ENCODE measurements at regions of chr18 and their contacts with region 1.

Region 1: DNA sequence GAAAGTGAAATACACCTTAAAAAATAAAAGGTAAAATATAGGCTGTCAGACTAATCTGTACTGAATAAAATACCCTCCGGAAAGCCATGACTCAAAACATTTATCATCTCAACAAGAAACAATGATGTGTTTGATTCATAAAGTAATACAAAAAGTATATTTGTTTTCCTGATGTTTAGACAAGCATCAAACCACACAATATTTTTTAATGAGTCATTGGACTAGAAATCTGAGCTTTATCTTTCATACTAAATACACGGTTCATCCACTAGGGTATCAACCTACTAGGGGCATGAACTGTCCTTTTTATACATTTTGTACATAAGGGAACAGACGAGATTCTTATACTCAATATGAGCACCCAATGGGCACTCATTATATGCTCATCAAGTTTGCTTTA is 31.3 kb downstream of the CD226 start:
- DNase-seq: no peak
- H3K4me3 Mint-ChIP-seq: no peak overlapping the region
- H3K27ac Mint-ChIP-seq: no peak overlapping the region
- H3K4me1 Mint-ChIP-seq: peaks cover 49% of the 10 kb centered on the region
- H3K27me3 Mint-ChIP-seq: no peaks in the 10 kb centered on the region

Region 2: DNA sequence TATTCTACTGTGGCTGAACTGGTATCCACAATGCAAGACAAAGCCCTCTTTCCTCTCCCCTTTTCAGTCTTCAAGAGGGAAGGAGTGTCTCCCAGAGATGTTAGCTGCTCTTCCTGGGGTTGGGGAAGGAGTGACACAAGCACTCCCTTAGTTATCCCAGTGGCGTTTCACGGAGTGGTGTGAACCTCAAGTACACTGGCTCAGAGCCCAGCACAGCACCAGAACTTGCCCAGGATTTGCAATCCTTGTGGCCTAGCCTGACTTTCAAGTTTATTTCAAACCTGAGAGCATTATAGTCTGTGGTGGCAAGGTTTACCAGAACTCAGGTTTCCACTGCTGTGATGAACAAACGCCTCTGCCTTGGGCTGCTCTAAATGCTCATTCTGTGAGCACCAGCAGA is 956.1 kb before region 1 on chr18:
- CTCF ChIA-PET with region 1: no interaction called
- intact Hi-C with region 1: no loop called
- DNase-seq: no peak
- H3K4me3 Mint-ChIP-seq: no peak overlapping the region
- H3K27ac Mint-ChIP-seq: no peak overlapping the region
- H3K4me1 Mint-ChIP-seq: no peaks in the 10 kb centered on the region
- H3K27me3 Mint-ChIP-seq: no peaks in the 10 kb centered on the region

Region 3: GRCh38 chr18:69830189-69830588 is 86.2 kb before region 1 on chr18:
- CTCF ChIA-PET with region 1: no interaction called
- intact Hi-C with region 1: no loop called
- DNase-seq: no peak
- H3K4me3 Mint-ChIP-seq: no peak overlapping the region
- H3K27ac Mint-ChIP-seq: no peak overlapping the region
- H3K4me1 Mint-ChIP-seq: no peaks in the 10 kb centered on the region
- H3K27me3 Mint-ChIP-seq: no peaks in the 10 kb centered on the region

Region 4: GRCh38 chr18:69858897-69859296 is 57.5 kb before region 1 on chr18:
- CTCF ChIA-PET with region 1: no interaction called
- intact Hi-C with region 1: no loop called
- DNase-seq: no peak
- H3K4me3 Mint-ChIP-seq: no peak overlapping the region
- H3K27ac Mint-ChIP-seq: no peak overlapping the region
- H3K4me1 Mint-ChIP-seq: no peaks in the 10 kb centered on the region
- H3K27me3 Mint-ChIP-seq: no peaks in the 10 kb centered on the region

Region 5: DNA sequence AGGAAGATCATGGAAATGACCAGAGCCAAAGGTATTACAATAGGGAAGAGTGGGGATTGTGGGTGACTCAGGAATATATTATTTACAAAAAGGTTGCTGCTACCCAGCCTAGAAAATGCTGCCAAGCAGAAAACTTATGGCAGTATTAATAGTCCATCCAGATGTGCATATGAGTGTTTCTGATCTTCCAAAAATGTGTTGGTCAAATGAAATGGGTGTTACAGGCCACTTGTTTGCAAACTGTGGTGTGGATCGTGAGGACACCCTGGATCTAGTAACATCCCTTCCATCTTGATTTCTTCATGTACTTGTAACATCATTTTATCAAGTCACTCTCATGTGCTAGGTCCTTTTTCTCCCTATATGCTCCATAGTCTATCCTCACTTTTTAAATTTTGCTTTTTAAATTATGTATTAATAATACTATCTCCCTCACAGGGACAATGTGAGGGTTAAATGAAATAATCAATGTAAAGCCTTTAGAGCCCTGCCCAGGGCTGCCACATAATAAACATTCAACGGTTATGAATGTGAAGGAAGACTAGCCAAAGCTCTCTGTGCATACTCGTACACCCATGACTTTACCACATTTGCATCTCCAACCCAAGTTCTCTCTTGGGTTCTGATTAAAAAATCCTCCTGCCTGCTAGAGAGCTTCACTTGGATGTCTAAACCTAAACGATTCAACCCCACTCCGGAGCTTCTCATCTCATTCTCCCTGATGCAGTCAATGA is 12.8 kb after region 1 on chr18:
- CTCF ChIA-PET with region 1: interaction called, 3 read pairs
- intact Hi-C with region 1: loop called (anchors 2 kb)
- DNase-seq: no peak
- H3K4me3 Mint-ChIP-seq: no peak overlapping the region
- H3K27ac Mint-ChIP-seq: no peak overlapping the region
- H3K4me1 Mint-ChIP-seq: peaks cover 35% of the 10 kb centered on the region
- H3K27me3 Mint-ChIP-seq: no peaks in the 10 kb centered on the region

Region 6: DNA sequence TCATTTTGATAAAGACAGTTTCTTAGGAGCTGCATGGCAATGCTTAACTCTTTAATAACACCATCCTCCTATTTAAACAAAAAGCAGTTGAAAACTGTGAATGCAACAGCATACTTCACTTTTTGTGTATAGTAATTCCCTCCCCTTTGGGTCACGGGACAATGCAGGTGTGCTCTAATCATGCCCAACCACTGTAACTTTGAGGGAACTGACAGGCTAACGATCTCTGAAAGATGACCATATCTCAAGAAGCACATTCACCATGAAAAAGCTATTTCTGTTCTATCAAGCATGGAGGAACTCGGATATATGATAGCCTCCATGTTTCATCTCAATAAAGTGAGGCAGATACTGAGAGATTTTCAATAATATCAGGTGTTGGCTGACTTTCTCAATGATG is 112.3 kb after region 1 on chr18:
- CTCF ChIA-PET with region 1: no interaction called
- intact Hi-C with region 1: no loop called
- DNase-seq: no peak
- H3K4me3 Mint-ChIP-seq: no peak overlapping the region
- H3K27ac Mint-ChIP-seq: no peak overlapping the region
- H3K4me1 Mint-ChIP-seq: no peaks in the 10 kb centered on the region
- H3K27me3 Mint-ChIP-seq: no peaks in the 10 kb centered on the region